Lower leg skin (tissue), 4 donors: ENCODE measurements at regions of chr7 and their contacts with region 1.

Region 1: GRCh38 chr7:56074371-56074791 is 10.3 kb downstream of the SUMF2 start:
- DNase-seq: peak; percentile 80 to 95
- H3K4me3 ChIP-seq: no peak overlapping the region
- CTCF ChIP-seq: no peak
- POLR2A ChIP-seq: no peak

Region 2: GRCh38 chr7:55641273-55641691 is 433.1 kb before region 1 on chr7:
- intact Hi-C with region 1: loop called (anchors 10 kb)
- DNase-seq: peak in 1 of 2 donors; percentile 32
- H3K4me3 ChIP-seq: no peak overlapping the region
- CTCF ChIP-seq: no peak
- POLR2A ChIP-seq: no peak

Region 3: DNA sequence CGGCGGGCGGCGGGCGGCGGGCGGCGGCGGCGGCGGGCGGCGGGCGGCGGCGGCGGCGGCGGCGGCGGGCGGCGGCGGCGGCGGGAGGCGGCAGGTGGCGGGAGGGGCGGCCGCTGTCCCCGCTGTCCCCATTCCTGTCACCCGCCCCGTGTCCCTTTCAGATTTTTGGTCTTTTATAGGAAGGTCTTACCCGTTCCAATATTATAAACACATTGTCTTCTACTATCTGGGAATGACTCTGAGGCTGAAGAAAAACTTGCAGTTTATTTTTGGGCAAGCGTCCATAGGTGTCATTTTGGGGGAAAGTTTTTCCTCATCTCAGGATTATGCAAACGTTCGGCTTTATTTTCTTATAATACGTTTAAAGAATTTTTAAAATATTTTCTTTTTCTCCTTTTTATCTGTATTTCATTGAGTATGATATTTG is 186.5 kb before region 1 on chr7:
- intact Hi-C with region 1: loop called (anchors 10 kb)
- DNase-seq: no peak
- H3K4me3 ChIP-seq: no peak overlapping the region
- CTCF ChIP-seq: no peak
- POLR2A ChIP-seq: no peak

Region 4: DNA sequence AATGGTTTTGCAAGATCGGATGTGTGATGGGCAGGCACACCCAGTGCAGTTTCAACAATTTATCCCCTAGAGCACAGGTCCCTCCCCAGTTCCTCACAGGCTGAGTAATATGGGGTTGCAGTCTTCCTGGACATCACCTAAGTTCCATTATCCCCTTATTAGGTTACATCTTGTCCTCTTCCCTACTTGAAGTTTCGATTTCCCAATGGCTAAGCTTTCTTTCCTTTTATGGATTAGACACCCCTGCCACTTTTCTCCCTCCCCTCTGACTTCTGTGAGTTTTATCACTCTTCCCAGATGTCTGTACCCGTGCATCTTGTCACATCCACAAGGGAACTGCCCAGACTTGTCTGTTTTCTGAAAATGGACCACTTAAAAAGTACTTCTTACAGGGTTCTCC is 112.4 kb before region 1 on chr7:
- intact Hi-C with region 1: no loop called
- DNase-seq: no peak
- H3K4me3 ChIP-seq: no peak overlapping the region
- CTCF ChIP-seq: no peak
- POLR2A ChIP-seq: no peak

Region 5: DNA sequence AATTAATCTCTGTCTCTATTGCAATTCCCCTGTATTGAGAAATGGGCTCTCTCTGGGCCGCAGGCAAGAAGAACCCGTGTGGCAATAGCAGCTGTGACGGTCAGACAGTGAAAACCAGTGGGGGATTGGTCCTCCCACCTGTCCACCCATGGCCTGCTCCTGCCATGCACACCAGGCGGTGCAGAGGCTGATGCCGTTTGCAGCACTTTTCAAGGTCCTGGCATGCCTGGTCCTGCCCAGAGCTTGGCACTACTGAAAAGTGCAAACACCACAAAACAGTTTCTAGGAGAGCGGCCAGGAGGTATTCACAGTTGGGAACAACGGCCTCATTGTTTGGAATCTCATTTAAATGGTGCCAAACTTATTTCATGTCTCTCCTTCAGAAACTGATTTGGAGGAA is 64.7 kb before region 1 on chr7:
- intact Hi-C with region 1: loop called (anchors 10 kb)
- DNase-seq: peak in 1 of 2 donors; percentile 20
- H3K4me3 ChIP-seq: no peak overlapping the region
- CTCF ChIP-seq: no peak
- POLR2A ChIP-seq: no peak

Region 6: GRCh38 chr7:56229631-56230030 is 155.2 kb after region 1 on chr7:
- intact Hi-C with region 1: no loop called
- DNase-seq: peak in 1 of 2 donors; percentile 66
- H3K4me3 ChIP-seq: no peak overlapping the region
- CTCF ChIP-seq: no peak
- POLR2A ChIP-seq: no peak